ENCODE measurements at regions of chr1 and their contacts with region 1.

Region 1: DNA sequence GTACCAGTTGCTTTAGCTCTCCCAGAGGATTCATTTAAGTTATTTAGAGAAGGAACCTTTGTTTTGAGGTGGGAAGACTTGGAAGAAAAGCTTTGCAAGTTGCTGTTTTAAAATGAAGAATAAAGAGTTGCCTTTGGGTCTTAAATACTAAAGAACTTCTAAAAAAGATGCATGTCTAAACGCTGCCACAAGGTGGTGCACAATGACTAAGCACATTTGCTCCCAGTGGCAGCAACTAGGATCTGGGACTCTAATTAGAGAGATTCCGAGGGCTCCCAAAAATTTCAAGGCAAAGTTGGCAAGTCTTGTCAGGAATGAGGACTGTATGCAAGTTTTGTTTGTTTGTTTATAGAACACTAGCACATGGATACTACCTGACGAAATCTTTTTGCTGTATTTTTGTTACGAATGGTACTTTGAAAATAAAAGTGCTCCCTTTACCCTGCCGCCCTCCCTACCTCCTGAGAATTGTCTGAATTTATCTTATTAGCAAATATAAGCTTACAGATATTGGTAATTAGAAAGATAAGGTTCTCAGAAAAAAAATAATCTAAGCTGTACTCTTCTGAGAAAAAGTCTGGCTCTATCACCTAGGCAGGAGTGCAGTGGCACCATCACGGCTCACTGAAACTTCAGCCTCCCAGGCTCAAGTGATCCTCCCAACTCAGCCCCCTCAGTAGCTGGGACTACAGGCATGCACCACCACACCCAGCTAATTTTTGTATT is 121.8 kb downstream of the HFM1 start:
- DNase-seq: peak; percentile 49 to 59
- H3K4me3 ChIP-seq: no peak overlapping the region
- H3K27ac ChIP-seq: no peak overlapping the region
- H3K4me1 ChIP-seq: no peaks in the 10 kb centered on the region
- H3K27me3 ChIP-seq: no peaks in the 10 kb centered on the region
- CTCF ChIP-seq: peak in 2 of 3 experiments; percentile 78 to 92; a peak in 3 of 4 replicates
- EP300 ChIP-seq: 0 out of 3 replicates have a peak, but pooled peaks of 1 of the 2 experiments have one; percentile 5
- POLR2A ChIP-seq: no peak
- RAD21 ChIP-seq: peak; percentile 93 to 94

Region 2: GRCh38 chr1:91173346-91173890 is 109.4 kb before region 1 on chr1:
- CTCF ChIA-PET with region 1: interaction called, 230 read pairs
- POLR2A ChIA-PET with region 1: no interaction called
- DNase-seq: no peak
- H3K4me3 ChIP-seq: no peak overlapping the region
- H3K27ac ChIP-seq: no peak overlapping the region
- H3K4me1 ChIP-seq: no peaks in the 10 kb centered on the region
- H3K27me3 ChIP-seq: no peaks in the 10 kb centered on the region
- CTCF ChIP-seq: no peak
- EP300 ChIP-seq: no peak
- POLR2A ChIP-seq: no peak
- RAD21 ChIP-seq: no peak

Region 3: DNA sequence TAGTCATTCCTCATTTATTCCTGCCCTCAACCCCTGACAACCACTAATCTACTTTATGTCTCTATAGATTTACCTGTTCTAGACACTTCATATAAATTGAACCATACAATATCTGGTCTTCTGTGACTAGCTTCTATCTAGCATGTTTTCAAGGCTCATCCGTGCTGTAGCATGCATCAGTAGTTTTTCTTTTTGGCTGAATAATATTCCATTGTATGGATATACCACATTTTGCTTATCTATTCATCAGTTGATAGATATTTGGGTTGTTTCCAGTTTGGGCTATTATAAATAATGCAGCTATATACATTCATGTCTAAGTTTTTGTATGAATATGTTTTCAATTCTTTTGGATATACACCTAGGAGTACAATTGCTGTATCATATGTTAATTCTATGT is 20.3 kb after region 1 on chr1:
- CTCF ChIA-PET with region 1: no interaction called
- POLR2A ChIA-PET with region 1: no interaction called
- DNase-seq: no peak
- H3K4me3 ChIP-seq: no peak overlapping the region
- H3K27ac ChIP-seq: no peak overlapping the region
- H3K4me1 ChIP-seq: no peaks in the 10 kb centered on the region
- H3K27me3 ChIP-seq: no peaks in the 10 kb centered on the region
- CTCF ChIP-seq: no peak
- EP300 ChIP-seq: no peak
- POLR2A ChIP-seq: no peak
- RAD21 ChIP-seq: no peak

Region 4: GRCh38 chr1:91500756-91501522 is 218.1 kb after region 1 on chr1 and contains the start of gene CDC7:
- CTCF ChIA-PET with region 1: interaction called, 5 read pairs
- POLR2A ChIA-PET with region 1: interaction called, 10 read pairs
- DNase-seq: peak; percentile 79 to 94
- H3K4me3 ChIP-seq: peak within 1 kb of the TSS; percentile 67 to 82 (median 76)
- H3K27ac ChIP-seq: peak within 1 kb of the TSS; percentile 99
- H3K4me1 ChIP-seq: peaks cover 2 to 14% (median 7%) of the 10 kb centered on the region in 4 experiments; a peak in 6 of 7 replicates
- H3K27me3 ChIP-seq: no peaks in the 10 kb centered on the region
- CTCF ChIP-seq: peak; percentile 35 to 61 (median 57)
- EP300 ChIP-seq: 0 out of 3 replicates have a peak, but pooled peaks of 1 of the 2 experiments have one; percentile 40
- POLR2A ChIP-seq: peak; percentile 90 to 95
- RAD21 ChIP-seq: peak in 1 of 2 experiments; percentile 54; a peak in 2 of 4 replicates
- total RNA-seq, gene CDC7: 34.4 and 36.4 TPM in 2 replicates

Region 5: GRCh38 chr1:91929250-91929649 is 646.4 kb after region 1 on chr1:
- CTCF ChIA-PET with region 1: interaction called, 10 read pairs
- POLR2A ChIA-PET with region 1: no interaction called
- DNase-seq: no peak
- H3K4me3 ChIP-seq: no peak overlapping the region
- H3K27ac ChIP-seq: no peak overlapping the region
- H3K4me1 ChIP-seq: no peaks in the 10 kb centered on the region
- H3K27me3 ChIP-seq: no peaks in the 10 kb centered on the region
- CTCF ChIP-seq: no peak
- EP300 ChIP-seq: no peak
- POLR2A ChIP-seq: no peak
- RAD21 ChIP-seq: no peak

Measured in H1 (cell line).